ENCODE measurements at regions of chr1 and their contacts with region 1.

Region 1: GRCh38 chr1:7070389-7071029 is 285.3 kb downstream of the CAMTA1 start:
- DNase-seq: no peak
- H3K4me3 ChIP-seq: peak overlapping the region; percentile 30
- H3K27me3 ChIP-seq: peaks cover 3% of the 10 kb centered on the region; the same call in 1 of the 2 replicates
- CTCF ChIP-seq: peak; percentile 93

Region 2: GRCh38 chr1:6743189-6744101 is 327.1 kb before region 1 on chr1:
- CTCF ChIA-PET with region 1: no interaction called
- POLR2A ChIA-PET with region 1: no interaction called
- DNase-seq: peak; percentile 60
- H3K4me3 ChIP-seq: no peak overlapping the region
- H3K27me3 ChIP-seq: no peaks in the 10 kb centered on the region
- CTCF ChIP-seq: no peak

Region 3: DNA sequence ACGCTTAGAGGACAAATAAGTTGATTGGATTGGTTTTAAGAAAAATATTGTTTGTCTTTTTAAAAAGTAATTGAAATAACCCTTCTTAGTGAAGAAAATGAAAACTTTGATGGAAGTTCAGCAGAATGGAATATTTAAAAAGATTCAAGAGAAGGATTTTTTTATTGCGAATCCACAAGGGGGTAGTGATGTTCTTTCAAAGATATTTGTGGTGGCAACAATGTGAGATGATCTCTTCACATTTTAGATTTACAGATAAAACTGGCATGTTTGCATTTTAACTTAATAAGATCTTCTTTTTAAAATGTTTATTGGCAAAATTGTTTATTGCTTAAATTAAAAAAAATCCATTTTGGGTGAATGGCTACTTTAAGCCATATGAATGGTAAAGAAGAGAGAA is 276.3 kb before region 1 on chr1:
- CTCF ChIA-PET with region 1: interaction called, 20 read pairs
- POLR2A ChIA-PET with region 1: no interaction called
- DNase-seq: no peak
- H3K4me3 ChIP-seq: no peak overlapping the region
- H3K27me3 ChIP-seq: no peaks in the 10 kb centered on the region
- CTCF ChIP-seq: peak; percentile 37

Region 4: GRCh38 chr1:7042322-7043190 is 28.0 kb before region 1 on chr1:
- CTCF ChIA-PET with region 1: interaction called, 23 read pairs
- POLR2A ChIA-PET with region 1: no interaction called
- DNase-seq: no peak
- H3K4me3 ChIP-seq: no peak overlapping the region
- H3K27me3 ChIP-seq: peaks cover 2% of the 10 kb centered on the region
- CTCF ChIP-seq: peak; percentile 52

Region 5: DNA sequence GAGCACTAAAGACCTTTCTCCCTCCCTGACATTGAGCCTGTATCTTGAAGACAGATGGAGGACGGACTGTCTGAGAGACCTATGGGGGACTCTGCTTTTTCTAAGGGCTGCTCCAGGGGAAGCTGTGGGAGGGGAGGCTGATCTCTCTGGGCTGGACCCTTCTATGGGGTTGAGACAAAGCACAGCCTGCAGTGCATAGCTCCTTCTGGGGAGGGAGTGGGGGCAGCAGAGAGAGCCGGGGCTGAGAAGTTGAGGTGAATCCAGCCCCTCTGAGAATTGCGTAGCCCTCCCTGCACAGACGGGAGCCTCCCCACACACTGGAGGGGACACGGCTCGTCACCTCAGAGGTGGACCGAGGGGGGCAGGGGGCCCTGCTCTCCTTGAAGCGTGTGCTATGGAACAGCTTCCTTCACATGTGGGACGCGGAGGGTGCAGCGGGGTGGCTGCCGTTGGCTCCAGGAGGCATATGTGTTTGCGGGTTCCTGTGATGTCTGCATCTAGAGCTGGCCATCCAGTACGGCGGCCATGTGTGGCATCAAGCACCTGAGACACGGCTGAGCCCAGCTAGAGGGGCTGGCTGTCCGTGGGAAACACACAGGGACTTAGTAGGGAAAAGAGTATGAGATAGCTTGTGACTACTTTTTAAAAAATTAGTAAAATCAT is 13.9 kb after region 1 on chr1:
- CTCF ChIA-PET with region 1: interaction called, 35 read pairs
- POLR2A ChIA-PET with region 1: no interaction called
- DNase-seq: no peak
- H3K4me3 ChIP-seq: no peak overlapping the region
- H3K27me3 ChIP-seq: no peaks in the 10 kb centered on the region; the same call in 1 of the 2 replicates
- CTCF ChIP-seq: no peak

Measured in BJ (cell line).